Activated CD4-positive, alpha-beta memory T cell treated with anti-CD3 and anti-CD28 coated beads for 36 hours (primary cell): ENCODE measurements at regions of chr3 and their contacts with region 1.

Region 1: GRCh38 chr3:105747060-105747541 is 121.7 kb downstream of the CBLB start:
- DNase-seq: no peak
- H3K4me3 Mint-ChIP-seq: no peak overlapping the region
- H3K27ac Mint-ChIP-seq: peak overlapping the region; percentile 57
- H3K4me1 Mint-ChIP-seq: peaks cover 68% of the 10 kb centered on the region
- H3K27me3 Mint-ChIP-seq: no peaks in the 10 kb centered on the region

Region 2: GRCh38 chr3:105700575-105700974 is 46.5 kb before region 1 on chr3:
- CTCF ChIA-PET with region 1: interaction called, 4 read pairs
- POLR2A ChIA-PET with region 1: no interaction called
- intact Hi-C with region 1: loop called (anchors 5 kb)
- DNase-seq: peak; percentile 50
- H3K4me3 Mint-ChIP-seq: no peak overlapping the region
- H3K27ac Mint-ChIP-seq: peak overlapping the region; percentile 55
- H3K4me1 Mint-ChIP-seq: peaks cover 30% of the 10 kb centered on the region
- H3K27me3 Mint-ChIP-seq: no peaks in the 10 kb centered on the region

Region 3: DNA sequence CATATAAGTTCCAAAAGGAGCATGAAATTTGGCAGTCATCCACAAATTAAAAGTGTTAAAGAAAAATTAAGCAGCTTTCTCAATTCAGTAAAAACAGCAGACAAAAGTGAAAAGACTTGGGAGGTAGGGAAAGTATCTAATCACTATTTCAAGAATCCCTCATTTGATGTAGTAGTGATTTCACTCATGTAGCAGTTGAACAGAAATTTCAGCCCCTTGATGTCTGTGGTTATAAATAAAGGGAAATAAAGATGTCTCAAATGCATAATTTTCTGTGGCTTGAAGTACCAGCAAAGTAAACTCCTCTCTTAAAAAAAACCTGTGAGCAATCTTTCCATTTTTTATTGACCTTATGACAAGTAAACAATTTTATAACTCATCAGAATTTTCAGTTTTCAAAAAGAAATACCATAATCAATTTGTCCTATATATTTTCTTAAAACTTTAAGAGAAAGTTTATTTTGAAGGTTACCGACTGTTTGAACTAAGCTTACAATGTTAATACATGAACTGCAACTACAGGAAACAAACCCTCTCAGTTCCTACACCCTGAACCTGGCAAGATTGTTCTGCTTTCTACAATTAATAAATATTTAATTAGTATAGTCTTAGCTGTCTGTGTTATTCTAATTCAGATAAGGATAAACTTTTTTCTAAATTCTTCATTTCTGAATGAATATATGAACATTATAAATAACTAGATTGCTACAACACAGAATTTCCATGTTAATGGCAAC is 27.5 kb after region 1 on chr3:
- CTCF ChIA-PET with region 1: no interaction called
- POLR2A ChIA-PET with region 1: interaction called, 3 read pairs
- intact Hi-C with region 1: loop called (anchors 1 kb)
- DNase-seq: no peak
- H3K4me3 Mint-ChIP-seq: no peak overlapping the region
- H3K27ac Mint-ChIP-seq: peak overlapping the region; percentile 49
- H3K4me1 Mint-ChIP-seq: peaks cover 71% of the 10 kb centered on the region
- H3K27me3 Mint-ChIP-seq: no peaks in the 10 kb centered on the region